ENCODE measurements at regions of chr15 and their contacts with region 1.

Region 1: GRCh38 chr15:84839689-84840654 is 22.8 kb downstream of the ALPK3 start:
- DNase-seq: no peak
- ATAC-seq: no peak
- H3K4me3 ChIP-seq: no peak overlapping the region
- H3K27ac ChIP-seq: no peak overlapping the region
- H3K4me1 ChIP-seq: peaks cover 6 to 17% of the 10 kb centered on the region in 2 experiments; a peak in 4 of 5 replicates
- H3K27me3 ChIP-seq: peaks cover 4 to 8% of the 10 kb centered on the region in 2 experiments; a peak in 4 of 5 replicates
- CTCF ChIP-seq: no peak
- EP300 ChIP-seq: no peak
- POLR2A ChIP-seq: no peak
- RAD21 ChIP-seq: no peak

Region 2: GRCh38 chr15:84582583-84583157 is 257.3 kb before region 1 on chr15:
- CTCF ChIA-PET with region 1: no interaction called
- POLR2A ChIA-PET with region 1: no interaction called
- in situ Hi-C with region 1: no loop called
- intact Hi-C with region 1: no loop called
- DNase-seq: no peak
- ATAC-seq: peak; percentile 35; the same call in 2 of the 3 replicates
- H3K4me3 ChIP-seq: no peak overlapping the region
- H3K27ac ChIP-seq: no peak overlapping the region
- H3K4me1 ChIP-seq: peaks cover 3 to 5% of the 10 kb centered on the region in 2 experiments; a peak in 2 of 5 replicates
- H3K27me3 ChIP-seq: no peaks in the 10 kb centered on the region
- CTCF ChIP-seq: no peak
- EP300 ChIP-seq: no peak
- POLR2A ChIP-seq: no peak
- RAD21 ChIP-seq: no peak

Region 3: DNA sequence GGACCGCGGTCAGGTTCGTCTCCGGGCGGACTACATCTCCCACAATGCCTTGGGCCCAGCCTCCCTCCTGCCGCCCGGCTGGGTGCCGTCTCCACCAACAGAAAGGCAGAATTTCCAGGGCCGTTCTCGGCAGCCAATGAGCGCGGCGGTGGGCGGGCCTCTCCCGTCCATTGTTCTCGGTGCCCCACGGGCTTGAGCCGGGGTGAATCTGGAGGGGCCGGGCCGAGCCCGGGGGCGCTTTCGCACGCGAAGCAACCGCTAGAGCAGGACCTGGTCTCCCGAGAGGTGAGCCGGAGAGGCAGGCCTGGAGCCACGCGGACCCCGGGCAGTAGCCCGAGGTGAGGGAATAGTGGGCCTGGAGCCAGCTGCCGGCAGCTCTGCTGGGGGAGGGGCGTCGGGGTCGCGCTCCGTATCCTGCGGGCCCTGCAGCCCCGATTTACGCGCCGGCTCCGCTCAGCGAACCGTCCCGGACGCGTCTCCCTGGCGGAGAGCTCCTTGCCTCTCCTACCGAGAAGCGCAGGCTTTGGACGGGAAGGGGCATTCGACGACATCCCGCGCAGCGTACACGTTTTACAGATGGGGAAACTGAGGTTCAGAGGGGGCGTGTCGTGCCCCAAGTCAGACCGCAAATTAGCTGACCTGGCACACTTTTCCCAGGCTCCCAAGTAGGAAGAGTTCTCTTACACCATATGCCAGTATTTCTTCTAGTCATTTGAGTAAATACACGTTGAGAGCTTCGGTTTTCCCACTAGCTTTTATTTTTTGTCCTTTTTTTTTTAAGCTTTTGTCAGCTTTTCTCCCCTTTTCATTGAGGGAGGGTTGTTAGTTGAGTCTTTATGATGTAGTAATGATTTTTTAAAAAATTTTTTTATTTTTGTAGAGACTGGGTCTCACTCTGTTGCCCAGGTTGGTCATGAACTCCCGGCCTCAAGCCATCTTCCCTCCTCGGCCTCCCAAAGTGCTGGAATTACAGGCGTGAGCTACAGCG is 238.8 kb before region 1 on chr15 and contains the start of gene ZSCAN2:
- CTCF ChIA-PET with region 1: no interaction called
- POLR2A ChIA-PET with region 1: no interaction called
- in situ Hi-C with region 1: no loop called
- intact Hi-C with region 1: no loop called
- DNase-seq: peak; percentile 96
- ATAC-seq: peak; percentile 99
- H3K4me3 ChIP-seq: peak within 1 kb of the TSS; percentile 60
- H3K27ac ChIP-seq: peak within 1 kb of the TSS; percentile 14; the same call in 2 of the 3 replicates
- H3K4me1 ChIP-seq: peaks cover 10 to 21% of the 10 kb centered on the region in 2 experiments
- H3K27me3 ChIP-seq: no peaks in the 10 kb centered on the region
- CTCF ChIP-seq: no peak; a peak in 1 of 6 replicates
- EP300 ChIP-seq: no peak
- POLR2A ChIP-seq: peak; percentile 71
- RAD21 ChIP-seq: no peak
- polyA plus RNA-seq, gene ZSCAN2: 1.7 to 2.3 TPM

Region 4: GRCh38 chr15:84797212-84797611 is 42.8 kb before region 1 on chr15:
- CTCF ChIA-PET with region 1: no interaction called
- POLR2A ChIA-PET with region 1: no interaction called
- in situ Hi-C with region 1: no loop called
- intact Hi-C with region 1: no loop called
- DNase-seq: no peak
- ATAC-seq: no peak
- H3K4me3 ChIP-seq: no peak overlapping the region
- H3K27ac ChIP-seq: no peak overlapping the region
- H3K4me1 ChIP-seq: no peaks in the 10 kb centered on the region
- H3K27me3 ChIP-seq: no peaks in the 10 kb centered on the region
- CTCF ChIP-seq: no peak
- EP300 ChIP-seq: no peak
- POLR2A ChIP-seq: no peak
- RAD21 ChIP-seq: no peak

Region 5: DNA sequence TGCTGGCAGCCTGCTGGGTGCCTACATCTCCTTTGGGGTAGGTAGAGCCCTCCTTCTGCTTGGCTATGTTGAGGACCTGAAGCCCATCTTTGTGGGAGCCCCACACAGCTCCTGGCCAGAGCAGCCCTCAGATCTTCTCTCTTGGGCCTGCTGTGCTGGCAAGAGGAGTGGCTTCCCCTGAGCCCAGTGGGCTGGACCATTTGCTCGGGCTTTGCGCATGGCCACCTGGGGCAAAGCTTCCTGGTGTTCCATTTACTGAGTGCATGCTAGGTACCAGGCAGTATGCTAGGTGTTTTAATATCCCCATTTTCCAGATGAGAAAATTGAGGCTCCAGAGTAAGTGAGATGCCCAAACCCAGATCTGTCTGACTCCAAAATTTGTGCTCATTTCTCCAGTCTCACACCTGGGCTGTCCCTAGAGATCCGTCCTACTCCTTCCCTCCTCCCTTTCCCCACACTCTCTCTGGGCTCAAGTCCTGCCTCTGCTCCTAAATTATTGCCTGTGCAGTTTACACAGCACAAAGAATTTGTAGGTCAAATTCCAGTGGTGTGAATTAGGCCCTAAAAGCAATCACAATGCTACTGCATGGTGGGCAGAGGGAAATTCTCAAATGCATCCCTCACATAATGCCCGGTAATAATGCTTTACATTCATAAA is 84.2 kb after region 1 on chr15:
- CTCF ChIA-PET with region 1: no interaction called
- POLR2A ChIA-PET with region 1: no interaction called
- in situ Hi-C with region 1: loop called (anchors 5 kb)
- intact Hi-C with region 1: loop called (anchors 5 kb)
- DNase-seq: no peak
- ATAC-seq: no peak
- H3K4me3 ChIP-seq: no peak overlapping the region
- H3K27ac ChIP-seq: no peak overlapping the region
- H3K4me1 ChIP-seq: peaks cover 6 to 10% of the 10 kb centered on the region in 2 experiments; a peak in 4 of 5 replicates
- H3K27me3 ChIP-seq: no peaks in the 10 kb centered on the region
- CTCF ChIP-seq: no peak
- EP300 ChIP-seq: no peak
- POLR2A ChIP-seq: no peak
- RAD21 ChIP-seq: no peak

Measured in K562 (cell line).